H1 (cell line): ENCODE measurements at regions of chr5 and their contacts with region 1.

Region 1: DNA sequence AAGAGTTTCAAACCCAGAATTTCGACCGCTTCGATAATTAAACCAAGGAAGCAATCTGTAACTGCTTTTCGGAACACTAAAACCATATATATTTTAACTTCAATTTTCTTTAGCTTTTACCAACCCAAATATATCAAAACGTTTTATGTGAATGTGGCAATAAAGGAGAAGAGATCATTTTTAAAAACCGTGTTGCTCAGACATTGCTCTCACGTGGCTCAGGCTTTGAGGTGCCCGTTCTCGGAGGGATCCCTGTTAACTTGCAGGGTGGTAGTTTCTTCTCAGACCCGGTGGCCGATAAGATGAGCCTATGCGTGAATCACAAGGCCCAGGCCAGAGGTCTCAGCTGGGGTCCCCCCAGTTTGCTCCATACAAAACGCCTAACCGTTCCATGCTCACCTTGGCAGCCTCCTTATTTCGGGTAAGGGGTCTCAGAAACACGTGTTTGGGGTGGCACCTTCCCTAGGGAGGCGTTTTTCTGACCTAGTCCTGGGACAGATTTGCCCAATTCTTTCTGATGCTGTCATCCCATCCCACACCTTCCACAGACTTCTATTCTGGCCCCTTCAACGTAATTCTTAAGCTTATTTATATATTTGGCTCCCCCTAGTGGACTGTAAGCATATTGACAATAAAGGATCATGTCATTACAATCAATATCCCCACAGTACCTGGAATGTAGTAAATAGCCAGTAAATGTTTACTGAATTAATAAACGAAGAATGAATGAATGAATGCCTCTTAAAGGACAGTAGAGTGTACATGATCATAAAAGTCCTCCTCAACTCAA is 48.1 kb downstream of the THBS4 start:
- DNase-seq: peak in 1 of 2 experiments; percentile 77
- H3K4me3 ChIP-seq: no peak overlapping the region
- H3K27ac ChIP-seq: no peak overlapping the region
- H3K4me1 ChIP-seq: no peaks in the 10 kb centered on the region; a peak in 1 of 7 replicates
- H3K27me3 ChIP-seq: no peaks in the 10 kb centered on the region
- CTCF ChIP-seq: peak in 2 of 3 experiments; percentile 51 to 63; a peak in 2 of 4 replicates
- EP300 ChIP-seq: no peak
- POLR2A ChIP-seq: no peak
- RAD21 ChIP-seq: peak; percentile 75 to 77

Region 2: DNA sequence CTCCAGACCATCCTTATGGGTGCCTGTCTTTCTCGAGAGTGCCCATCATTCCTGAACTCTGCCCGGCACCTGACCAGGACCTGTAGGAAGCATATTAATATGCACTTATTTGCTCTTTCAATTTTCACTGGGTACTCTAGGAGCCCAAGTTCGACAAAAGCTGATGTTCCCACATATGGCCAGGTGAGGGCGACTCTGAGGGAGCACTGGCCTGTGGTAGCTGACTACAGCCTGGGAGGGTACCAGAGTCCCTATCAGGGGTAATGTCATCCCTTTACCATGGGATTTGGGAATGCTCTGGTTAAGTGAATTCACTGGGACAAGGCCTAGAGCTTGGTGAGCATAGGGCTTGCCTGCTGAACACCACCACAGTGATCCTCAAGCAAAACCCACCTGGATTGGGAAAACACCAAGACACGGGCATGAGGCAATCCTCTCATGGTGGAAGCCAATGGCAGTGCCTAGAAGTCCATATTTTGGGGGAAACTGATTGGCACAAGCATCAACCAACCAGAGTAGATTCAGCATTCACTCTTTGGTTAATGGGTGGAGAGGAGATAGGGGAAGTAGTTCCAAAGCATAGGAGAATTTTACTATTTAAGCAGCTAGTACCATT is 204.5 kb before region 1 on chr5:
- CTCF ChIA-PET with region 1: interaction called, 24 read pairs
- POLR2A ChIA-PET with region 1: no interaction called
- DNase-seq: peak; percentile 5 to 87
- H3K4me3 ChIP-seq: no peak overlapping the region
- H3K27ac ChIP-seq: no peak overlapping the region
- H3K4me1 ChIP-seq: no peaks in the 10 kb centered on the region
- H3K27me3 ChIP-seq: no peaks in the 10 kb centered on the region
- CTCF ChIP-seq: peak; percentile 80 to 91 (median 89)
- EP300 ChIP-seq: no peak
- POLR2A ChIP-seq: no peak
- RAD21 ChIP-seq: peak; percentile 74 to 82

Region 3: DNA sequence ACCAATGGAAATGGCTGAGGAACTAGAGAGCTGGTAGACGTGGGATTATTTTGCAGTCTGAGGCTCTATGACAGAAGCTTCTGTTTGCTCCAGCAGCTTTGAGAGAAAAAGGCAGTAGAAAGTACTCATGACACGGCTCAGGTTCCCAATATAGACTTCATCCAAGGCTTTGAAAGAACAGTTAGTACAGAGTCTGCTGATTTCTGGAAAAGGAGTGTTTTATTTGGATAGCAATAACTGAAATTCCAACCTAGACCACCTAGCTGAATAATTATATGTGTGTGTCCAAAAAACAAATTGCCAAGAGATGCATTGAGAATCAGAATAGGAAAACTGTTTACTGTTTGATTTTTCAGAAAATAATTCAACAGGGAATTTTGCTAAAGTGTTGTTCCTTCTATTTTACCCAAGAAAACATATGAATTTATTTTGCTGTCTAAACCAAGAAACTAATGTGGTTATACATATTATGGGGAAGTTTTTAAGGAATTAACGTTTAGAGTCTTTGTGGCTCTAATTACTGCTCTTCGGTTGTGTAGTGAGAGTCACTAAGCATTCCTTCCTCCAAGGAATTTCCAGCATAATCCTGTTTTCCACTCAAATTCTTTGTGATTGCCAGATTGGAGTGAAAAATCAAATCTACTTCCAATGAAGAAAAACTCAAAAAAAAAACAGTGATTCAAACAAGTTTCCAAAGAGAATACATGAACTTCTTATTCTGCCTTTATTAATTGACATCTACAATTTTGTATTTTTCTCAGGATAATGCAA is 74.1 kb before region 1 on chr5:
- CTCF ChIA-PET with region 1: interaction called, 10 read pairs
- POLR2A ChIA-PET with region 1: no interaction called
- DNase-seq: no peak
- H3K4me3 ChIP-seq: no peak overlapping the region
- H3K27ac ChIP-seq: no peak overlapping the region
- H3K4me1 ChIP-seq: no peaks in the 10 kb centered on the region
- H3K27me3 ChIP-seq: no peaks in the 10 kb centered on the region
- CTCF ChIP-seq: no peak
- EP300 ChIP-seq: no peak
- POLR2A ChIP-seq: no peak
- RAD21 ChIP-seq: no peak

Region 4: DNA sequence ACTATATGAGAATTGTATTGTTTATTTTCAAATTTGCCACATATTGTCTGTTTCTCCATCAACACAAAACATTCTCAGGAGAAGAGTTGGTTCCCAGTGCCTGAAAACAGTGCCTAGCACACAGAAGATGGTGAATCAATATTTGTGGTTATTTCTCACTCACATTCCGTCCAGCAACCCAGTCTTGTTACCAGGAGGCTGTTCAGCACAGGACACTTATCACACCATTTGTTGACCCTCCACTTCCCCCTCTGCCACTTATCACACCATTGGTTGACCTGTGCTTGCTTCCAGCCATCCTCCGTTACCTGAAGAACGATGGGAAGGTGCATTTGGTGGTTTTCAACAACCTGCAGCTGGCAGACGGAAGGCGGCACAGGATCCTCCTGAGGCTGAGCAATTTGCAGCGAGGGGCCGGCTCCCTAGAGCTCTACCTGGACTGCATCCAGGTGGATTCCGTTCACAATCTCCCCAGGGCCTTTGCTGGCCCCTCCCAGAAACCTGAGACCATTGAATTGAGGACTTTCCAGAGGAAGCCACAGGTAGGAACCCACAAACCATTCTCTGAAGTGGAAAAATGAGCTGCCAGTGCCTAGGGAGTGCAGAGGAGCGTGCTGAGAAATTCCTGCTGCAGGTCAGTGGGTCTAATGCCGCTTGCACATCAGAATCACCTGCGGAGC is 27.7 kb before region 1 on chr5:
- CTCF ChIA-PET with region 1: interaction called, 14 read pairs
- POLR2A ChIA-PET with region 1: no interaction called
- DNase-seq: peak; percentile 9 to 58
- H3K4me3 ChIP-seq: no peak overlapping the region
- H3K27ac ChIP-seq: no peak overlapping the region
- H3K4me1 ChIP-seq: peaks cover 0 to 7% (median 0%) of the 10 kb centered on the region in 4 experiments; a peak in 3 of 7 replicates
- H3K27me3 ChIP-seq: no peaks in the 10 kb centered on the region
- CTCF ChIP-seq: no peak
- EP300 ChIP-seq: no peak
- POLR2A ChIP-seq: no peak
- RAD21 ChIP-seq: no peak

Region 5: GRCh38 chr5:80093796-80094195 is 10.5 kb after region 1 on chr5:
- CTCF ChIA-PET with region 1: interaction called, 13 read pairs
- POLR2A ChIA-PET with region 1: interaction called, 3 read pairs
- DNase-seq: no peak
- H3K4me3 ChIP-seq: no peak overlapping the region
- H3K27ac ChIP-seq: no peak overlapping the region
- H3K4me1 ChIP-seq: peaks cover 5 to 12% (median 8%) of the 10 kb centered on the region in 4 experiments
- H3K27me3 ChIP-seq: no peaks in the 10 kb centered on the region
- CTCF ChIP-seq: peak in 2 of 3 experiments; percentile 7 to 11; a peak in 2 of 4 replicates
- EP300 ChIP-seq: no peak
- POLR2A ChIP-seq: no peak
- RAD21 ChIP-seq: peak in 1 of 2 experiments; percentile 35; a peak in 2 of 4 replicates